ENCODE measurements at regions of chr1 and their contacts with region 1.

Region 1: DNA sequence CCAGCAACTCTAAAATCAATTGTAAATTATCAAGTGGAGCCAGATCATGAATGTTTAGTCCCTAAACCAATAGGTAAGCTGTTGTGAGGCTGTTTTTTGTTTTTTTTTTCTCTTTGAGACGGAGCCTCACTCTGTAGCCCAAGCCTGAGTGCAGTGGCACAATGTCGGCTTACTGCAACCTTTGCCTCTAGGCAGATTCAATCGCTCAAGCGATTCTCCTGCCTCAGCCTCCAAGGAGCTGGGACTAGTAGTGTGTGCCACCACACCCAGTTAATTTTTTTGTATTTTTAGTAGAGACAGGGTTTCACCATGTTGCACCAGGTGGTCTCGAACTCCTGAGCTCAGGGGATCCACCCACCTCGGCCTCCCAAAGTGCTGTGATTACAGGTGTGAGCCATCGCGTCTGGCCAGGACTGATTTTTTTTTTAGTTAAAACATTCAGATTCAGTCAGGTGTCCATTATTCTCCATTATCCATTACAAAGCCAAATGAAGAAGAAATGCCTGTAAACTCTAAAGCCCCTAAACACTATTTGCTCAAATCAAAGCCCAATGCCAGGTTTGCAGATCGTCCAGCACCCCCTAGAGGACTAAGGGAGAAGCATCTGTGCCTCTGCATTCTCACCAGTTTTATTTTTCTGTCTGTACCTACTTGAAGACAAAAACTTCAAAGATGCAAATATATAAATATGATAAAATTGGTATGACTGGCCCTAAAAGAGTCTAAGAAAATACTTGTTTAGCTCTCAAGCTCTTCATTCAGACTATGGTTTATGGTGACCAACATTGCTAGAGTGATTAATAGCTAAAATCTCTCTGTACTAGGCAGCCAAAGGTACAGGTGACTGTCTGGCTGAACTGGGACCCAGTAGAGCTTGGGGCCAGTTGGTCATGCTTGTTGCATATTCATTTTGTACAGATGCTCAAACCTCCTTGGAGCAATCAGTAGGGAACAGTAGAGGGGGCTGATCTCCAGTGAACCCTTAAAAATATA is 138.6 kb downstream of the SYT2 start:
- DNase-seq: no peak
- ATAC-seq: peak; percentile 82
- H3K4me3 ChIP-seq: no peak overlapping the region
- H3K27ac ChIP-seq: no peak overlapping the region
- H3K4me1 ChIP-seq: peaks cover 7% of the 10 kb centered on the region; the same call in 1 of the 2 replicates
- H3K27me3 ChIP-seq: no peaks in the 10 kb centered on the region
- CTCF ChIP-seq: peak; percentile 87 to 89 (median 88)
- EP300 ChIP-seq: no peak
- POLR2A ChIP-seq: no peak
- RAD21 ChIP-seq: peak; percentile 99

Region 2: GRCh38 chr1:201625226-201625761 is 946.3 kb before region 1 on chr1:
- CTCF ChIA-PET with region 1: no interaction called
- POLR2A ChIA-PET with region 1: no interaction called
- RAD21 ChIA-PET with region 1: no interaction called
- SMC1A ChIA-PET with region 1: no interaction called
- in situ Hi-C with region 1: no loop called
- intact Hi-C with region 1: no loop called
- DNase-seq: no peak
- ATAC-seq: no peak
- H3K4me3 ChIP-seq: no peak overlapping the region
- H3K27ac ChIP-seq: no peak overlapping the region
- H3K4me1 ChIP-seq: no peaks in the 10 kb centered on the region
- H3K27me3 ChIP-seq: peaks cover 0 to 1% of the 10 kb centered on the region in 2 experiments; a peak in 2 of 4 replicates
- CTCF ChIP-seq: no peak
- EP300 ChIP-seq: no peak
- POLR2A ChIP-seq: no peak
- RAD21 ChIP-seq: no peak

Region 3: DNA sequence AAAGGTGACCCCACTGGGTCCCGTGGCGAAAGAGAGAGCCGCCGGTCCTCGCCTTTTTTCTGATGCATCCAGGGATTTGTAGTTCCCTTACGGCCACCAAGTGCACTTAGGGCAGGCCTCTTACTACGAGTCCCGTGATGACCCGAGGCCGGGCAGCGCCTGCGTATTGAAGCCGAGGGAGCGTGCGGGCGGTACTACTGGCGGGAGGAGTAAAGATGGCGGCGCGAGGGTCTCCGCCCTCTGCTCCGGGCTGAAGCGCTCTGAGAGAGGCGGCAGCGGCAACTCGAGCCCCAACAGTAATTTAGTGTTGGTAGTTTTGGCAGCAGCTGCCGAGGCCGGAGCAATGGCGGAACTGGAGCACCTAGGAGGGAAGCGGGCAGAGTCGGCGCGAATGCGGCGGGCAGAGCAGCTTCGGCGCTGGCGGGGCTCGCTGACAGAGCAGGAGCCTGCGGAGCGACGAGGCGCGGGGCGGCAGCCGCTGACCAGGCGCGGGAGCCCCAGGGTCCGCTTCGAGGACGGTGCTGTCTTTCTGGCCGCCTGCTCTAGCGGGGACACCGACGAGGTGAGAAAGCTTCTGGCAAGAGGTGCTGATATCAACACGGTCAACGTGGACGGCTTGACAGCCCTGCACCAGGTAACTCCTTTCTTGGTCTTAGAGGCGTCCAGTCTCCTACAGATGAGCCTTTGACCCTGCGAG is 223.0 kb before region 1 on chr1 and contains the start of gene PPP1R12B:
- CTCF ChIA-PET with region 1: interaction called, 21 read pairs
- POLR2A ChIA-PET with region 1: no interaction called
- RAD21 ChIA-PET with region 1: interaction called, 5 read pairs
- SMC1A ChIA-PET with region 1: interaction called, 7 read pairs
- in situ Hi-C with region 1: no loop called
- intact Hi-C with region 1: loop called (anchors 5 kb)
- DNase-seq: peak; percentile 94
- ATAC-seq: peak; percentile 99
- H3K4me3 ChIP-seq: peak within 1 kb of the TSS; percentile 88
- H3K27ac ChIP-seq: peak within 1 kb of the TSS; percentile 40; the same call in 1 of the 2 replicates
- H3K4me1 ChIP-seq: no peaks in the 10 kb centered on the region; the same call in 1 of the 2 replicates
- H3K27me3 ChIP-seq: no peaks in the 10 kb centered on the region
- CTCF ChIP-seq: no peak
- EP300 ChIP-seq: no peak
- POLR2A ChIP-seq: peak; percentile 77
- RAD21 ChIP-seq: no peak
- polyA plus RNA-seq, gene PPP1R12B: 0.29 to 0.61 TPM

Region 4: GRCh38 chr1:202471246-202471645 is 100.4 kb before region 1 on chr1:
- CTCF ChIA-PET with region 1: interaction called, 11 read pairs
- POLR2A ChIA-PET with region 1: no interaction called
- RAD21 ChIA-PET with region 1: no interaction called
- SMC1A ChIA-PET with region 1: interaction called, 7 read pairs
- in situ Hi-C with region 1: no loop called
- intact Hi-C with region 1: loop called (anchors 5 kb)
- DNase-seq: no peak
- ATAC-seq: no peak
- H3K4me3 ChIP-seq: no peak overlapping the region
- H3K27ac ChIP-seq: no peak overlapping the region
- H3K4me1 ChIP-seq: no peaks in the 10 kb centered on the region
- H3K27me3 ChIP-seq: no peaks in the 10 kb centered on the region
- CTCF ChIP-seq: no peak
- EP300 ChIP-seq: no peak
- POLR2A ChIP-seq: no peak
- RAD21 ChIP-seq: no peak

Region 5: DNA sequence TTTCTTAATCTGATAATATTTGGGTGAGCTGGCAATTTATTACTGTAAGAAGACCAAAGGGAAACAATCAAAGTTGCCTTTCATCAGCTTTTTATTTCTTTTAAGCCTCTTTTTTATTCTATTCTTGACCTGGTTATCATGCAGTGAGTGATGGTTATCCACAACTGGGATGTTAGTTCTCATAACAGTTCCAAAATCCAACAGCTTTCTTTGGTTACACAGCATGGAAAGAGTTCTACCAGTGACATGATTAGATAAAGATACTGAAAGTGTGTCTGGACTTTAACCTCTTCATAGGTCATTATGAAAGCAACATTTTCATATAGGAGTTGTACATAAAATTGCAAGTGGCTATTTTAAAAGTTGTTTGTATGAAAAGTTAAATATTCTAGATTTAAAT is 24.4 kb before region 1 on chr1:
- CTCF ChIA-PET with region 1: interaction called, 14 read pairs
- POLR2A ChIA-PET with region 1: no interaction called
- RAD21 ChIA-PET with region 1: no interaction called
- SMC1A ChIA-PET with region 1: interaction called, 3 read pairs
- in situ Hi-C with region 1: no loop called
- intact Hi-C with region 1: no loop called
- DNase-seq: no peak
- ATAC-seq: peak; percentile 80
- H3K4me3 ChIP-seq: no peak overlapping the region
- H3K27ac ChIP-seq: no peak overlapping the region
- H3K4me1 ChIP-seq: peaks cover 7% of the 10 kb centered on the region; the same call in 1 of the 2 replicates
- H3K27me3 ChIP-seq: no peaks in the 10 kb centered on the region
- CTCF ChIP-seq: no peak
- EP300 ChIP-seq: no peak
- POLR2A ChIP-seq: no peak
- RAD21 ChIP-seq: no peak

Region 6: DNA sequence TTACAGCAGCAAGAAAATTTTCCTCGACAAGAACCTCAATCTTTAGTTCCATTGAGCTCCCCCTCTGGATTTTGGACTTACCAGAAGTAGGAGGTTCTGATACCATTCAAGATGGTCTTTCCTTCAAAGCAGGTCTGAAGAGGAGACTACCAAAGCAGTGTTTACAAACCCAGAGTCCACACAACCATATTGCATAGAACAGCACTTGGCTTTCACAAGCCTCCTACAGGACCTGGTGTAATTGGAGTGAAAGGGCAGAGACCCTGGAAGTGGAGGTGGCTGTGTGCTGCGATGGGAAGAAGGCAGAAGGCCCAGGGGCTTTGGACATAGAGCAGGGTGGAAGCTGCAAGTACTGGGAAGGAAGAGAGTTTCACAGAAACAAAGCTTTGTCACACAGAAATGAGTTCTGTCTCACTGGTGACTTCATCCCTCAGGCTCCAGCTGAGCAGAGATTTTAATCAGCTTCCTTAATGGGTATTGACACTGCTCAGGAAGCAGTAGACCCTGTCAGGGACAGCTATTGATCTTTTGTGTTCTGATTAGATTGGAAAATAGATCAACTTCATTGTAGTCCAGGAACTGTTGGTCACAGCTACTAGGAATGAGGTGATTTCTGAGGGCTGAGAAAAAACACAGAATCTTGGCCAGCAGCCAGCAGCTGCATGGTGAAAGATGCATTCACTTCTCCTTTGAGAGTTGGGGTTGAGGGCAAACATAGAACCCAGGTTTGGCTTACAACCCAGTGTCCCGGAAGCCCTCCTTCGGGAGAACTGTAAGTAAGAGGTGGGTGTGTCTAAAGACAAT is 14.6 kb after region 1 on chr1:
- CTCF ChIA-PET with region 1: interaction called, 33 read pairs
- POLR2A ChIA-PET with region 1: no interaction called
- RAD21 ChIA-PET with region 1: interaction called, 16 read pairs
- SMC1A ChIA-PET with region 1: interaction called, 50 read pairs
- in situ Hi-C with region 1: no loop called
- intact Hi-C with region 1: no loop called
- DNase-seq: peak; percentile 40
- ATAC-seq: peak; percentile 73
- H3K4me3 ChIP-seq: no peak overlapping the region
- H3K27ac ChIP-seq: no peak overlapping the region
- H3K4me1 ChIP-seq: peaks cover 10% of the 10 kb centered on the region
- H3K27me3 ChIP-seq: no peaks in the 10 kb centered on the region
- CTCF ChIP-seq: no peak
- EP300 ChIP-seq: no peak
- POLR2A ChIP-seq: no peak
- RAD21 ChIP-seq: no peak

Region 7: GRCh38 chr1:202710070-202711045 is 138.7 kb after region 1 on chr1 and contains the start of gene SYT2:
- CTCF ChIA-PET with region 1: interaction called, 3 read pairs
- POLR2A ChIA-PET with region 1: no interaction called
- RAD21 ChIA-PET with region 1: no interaction called
- SMC1A ChIA-PET with region 1: interaction called, 3 read pairs
- in situ Hi-C with region 1: no loop called
- intact Hi-C with region 1: loop called (anchors 10 kb)
- DNase-seq: no peak
- ATAC-seq: peak; percentile 27; the same call in 1 of the 3 replicates
- H3K4me3 ChIP-seq: no peak within 1 kb of the TSS
- H3K27ac ChIP-seq: no peak within 1 kb of the TSS
- H3K4me1 ChIP-seq: no peaks in the 10 kb centered on the region
- H3K27me3 ChIP-seq: peaks cover 12% of the 10 kb centered on the region in 2 experiments
- CTCF ChIP-seq: no peak
- EP300 ChIP-seq: no peak
- POLR2A ChIP-seq: no peak
- RAD21 ChIP-seq: no peak
- polyA plus RNA-seq, gene SYT2: not detected

Measured in GM12878 (cell line).